B cell (primary cell): ENCODE measurements at regions of chr6 and their contacts with region 1.

Region 1: DNA sequence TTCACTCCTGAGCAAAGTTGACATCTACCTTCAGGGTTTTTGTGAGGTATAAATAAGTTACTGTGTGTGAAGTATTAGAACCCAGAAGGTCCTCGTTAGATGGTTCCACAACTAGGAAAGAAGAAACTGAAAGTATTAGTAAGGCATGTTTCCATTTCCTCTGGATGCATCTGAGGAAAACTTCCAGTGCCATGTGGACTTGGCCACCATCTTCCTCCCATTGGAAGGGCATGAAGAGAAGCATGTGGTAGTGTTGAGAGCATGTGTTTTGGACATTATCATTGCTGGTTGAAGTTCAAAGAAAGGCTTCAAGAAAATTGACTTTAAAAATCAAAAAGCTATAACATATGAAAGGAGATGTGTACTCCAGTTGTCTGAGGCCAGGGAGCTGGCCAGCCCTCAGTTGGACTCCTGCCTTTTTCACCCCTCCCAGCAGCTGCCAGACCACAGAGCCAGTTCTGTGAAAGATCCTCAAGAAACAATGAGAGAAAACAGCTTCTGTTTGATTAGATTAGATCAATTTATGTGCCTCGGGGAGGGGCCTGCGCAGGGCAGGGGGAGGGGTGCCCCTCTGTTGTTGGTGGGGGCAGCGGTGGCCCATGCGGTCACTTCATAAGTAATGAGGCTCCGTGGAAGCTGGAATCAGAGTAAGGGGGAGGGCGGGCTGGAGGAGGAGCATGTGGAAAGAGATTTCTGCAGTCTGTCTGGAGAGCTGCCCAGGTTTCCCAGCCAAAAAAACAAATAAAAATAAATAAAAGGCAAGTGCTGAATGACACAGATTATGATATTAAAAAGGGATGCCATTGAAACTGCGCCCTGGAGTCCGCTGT is 154.0 kb downstream of the JARID2 start:
- DNase-seq: no peak
- ATAC-seq: no peak
- H3K4me3 ChIP-seq: peak overlapping the region in 1 of 5 experiments; percentile 32
- H3K4me3 Mint-ChIP-seq: peak overlapping the region; percentile 63
- H3K27ac ChIP-seq: no peak overlapping the region
- H3K27ac Mint-ChIP-seq: no peak overlapping the region
- H3K4me1 ChIP-seq: peaks cover 56 to 57% of the 10 kb centered on the region in 2 donors
- H3K4me1 Mint-ChIP-seq: peaks cover 76% of the 10 kb centered on the region
- H3K27me3 ChIP-seq: no peaks in the 10 kb centered on the region
- H3K27me3 Mint-ChIP-seq: no peaks in the 10 kb centered on the region
- CTCF ChIP-seq: no peak

Region 2: DNA sequence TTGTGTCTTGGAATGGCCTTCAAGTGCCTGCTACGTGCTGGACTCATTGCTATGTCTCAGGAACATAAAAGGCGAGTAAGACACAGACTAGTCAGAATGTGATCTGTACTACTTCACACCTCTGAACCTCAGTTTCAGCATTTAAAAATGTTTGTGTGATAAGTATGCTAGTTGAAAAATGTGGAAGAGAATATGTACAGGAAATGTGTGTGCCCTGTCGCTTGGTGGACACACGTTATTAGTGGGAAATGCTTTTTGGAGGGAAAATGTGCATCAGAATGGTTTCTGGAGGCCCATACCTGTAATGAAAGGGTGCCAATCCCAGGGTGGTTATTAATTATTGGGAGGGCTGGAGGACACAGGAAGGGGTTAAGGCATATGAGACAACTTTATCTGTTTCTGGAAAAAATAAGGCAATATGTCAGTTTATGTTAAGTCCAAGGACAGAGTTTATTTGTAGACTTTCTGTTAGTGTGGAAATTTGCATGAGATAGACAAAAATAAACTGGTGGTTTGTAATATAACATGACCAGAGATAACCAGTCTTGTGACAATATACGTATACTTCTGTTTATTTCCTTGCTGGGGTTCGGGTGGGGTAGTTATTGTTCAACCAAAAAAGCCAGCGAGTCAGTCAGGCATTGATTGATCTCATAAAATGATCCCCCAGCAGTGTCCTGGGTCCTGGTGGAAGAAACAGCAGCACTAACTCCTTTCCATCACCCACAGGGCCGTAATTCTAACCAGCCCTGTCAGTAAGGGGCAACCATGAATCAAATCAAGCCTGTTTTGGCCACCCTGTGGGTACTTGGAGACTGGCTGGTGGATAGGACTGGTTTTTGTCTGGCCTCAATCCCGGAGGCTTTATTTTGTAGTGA is 36.1 kb before region 1 on chr6:
- CTCF ChIA-PET with region 1: no interaction called
- POLR2A ChIA-PET with region 1: no interaction called
- intact Hi-C with region 1: loop called (anchors 5 kb)
- DNase-seq: peak; percentile 56
- ATAC-seq: peak; percentile 58
- H3K4me3 ChIP-seq: no peak overlapping the region
- H3K4me3 Mint-ChIP-seq: no peak overlapping the region
- H3K27ac ChIP-seq: no peak overlapping the region
- H3K27ac Mint-ChIP-seq: no peak overlapping the region
- H3K4me1 ChIP-seq: peaks cover 51 to 65% of the 10 kb centered on the region in 2 donors
- H3K4me1 Mint-ChIP-seq: peaks cover 29% of the 10 kb centered on the region
- H3K27me3 ChIP-seq: no peaks in the 10 kb centered on the region
- H3K27me3 Mint-ChIP-seq: no peaks in the 10 kb centered on the region
- CTCF ChIP-seq: no peak

Region 3: GRCh38 chr6:15441215-15441868 is 41.5 kb after region 1 on chr6:
- CTCF ChIA-PET with region 1: interaction called, 5 read pairs
- POLR2A ChIA-PET with region 1: no interaction called
- intact Hi-C with region 1: loop called (anchors 5 kb)
- DNase-seq: peak; percentile 67
- ATAC-seq: peak; percentile 58
- H3K4me3 ChIP-seq: no peak overlapping the region
- H3K4me3 Mint-ChIP-seq: no peak overlapping the region
- H3K27ac ChIP-seq: no peak overlapping the region
- H3K27ac Mint-ChIP-seq: peak overlapping the region; percentile 38
- H3K4me1 ChIP-seq: peaks cover 31 to 54% of the 10 kb centered on the region in 2 donors
- H3K4me1 Mint-ChIP-seq: peaks cover 71% of the 10 kb centered on the region
- H3K27me3 ChIP-seq: no peaks in the 10 kb centered on the region
- H3K27me3 Mint-ChIP-seq: no peaks in the 10 kb centered on the region
- CTCF ChIP-seq: peak; percentile 82

Region 4: DNA sequence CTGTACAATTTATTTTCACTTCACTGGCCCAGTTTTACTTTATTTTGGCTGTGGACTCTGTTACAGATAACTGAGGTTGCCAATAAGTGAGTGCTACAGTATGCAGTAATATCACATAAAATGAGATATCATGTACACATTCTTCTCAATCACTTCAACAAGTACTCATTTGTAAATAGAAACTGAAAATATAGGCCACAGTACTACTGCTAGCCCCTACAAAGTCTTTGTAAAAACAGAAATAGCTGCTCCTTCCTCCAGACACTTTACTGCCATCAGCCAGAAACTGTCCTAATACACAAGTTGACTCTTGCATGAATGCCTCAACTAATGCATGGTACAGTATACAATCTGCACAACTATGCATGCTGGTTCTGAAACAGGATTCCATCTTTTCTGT is 253.7 kb after region 1 on chr6:
- CTCF ChIA-PET with region 1: no interaction called
- POLR2A ChIA-PET with region 1: no interaction called
- intact Hi-C with region 1: no loop called
- DNase-seq: no peak
- ATAC-seq: no peak
- H3K4me3 ChIP-seq: no peak overlapping the region
- H3K4me3 Mint-ChIP-seq: peak overlapping the region; percentile 10
- H3K27ac ChIP-seq: peak overlapping the region in 1 of 2 donors; percentile 27
- H3K27ac Mint-ChIP-seq: no peak overlapping the region
- H3K4me1 ChIP-seq: peaks cover 30 to 41% of the 10 kb centered on the region in 2 donors
- H3K4me1 Mint-ChIP-seq: peaks cover 54% of the 10 kb centered on the region
- H3K27me3 ChIP-seq: no peaks in the 10 kb centered on the region
- H3K27me3 Mint-ChIP-seq: no peaks in the 10 kb centered on the region
- CTCF ChIP-seq: no peak